ENCODE measurements at regions of chr14 and their contacts with region 1.

Region 1: GRCh38 chr14:49620182-49621113 is at the starts of genes MGAT2 and RPL36AL:
- DNase-seq: peak; percentile 91 to 97 (median 94)
- ATAC-seq: peak; percentile 90
- H3K4me3 ChIP-seq: peak within 1 kb of the TSS; percentile 89
- H3K27ac ChIP-seq: peak within 1 kb of the TSS; percentile 98
- H3K4me1 ChIP-seq: peaks cover 4 to 14% of the 10 kb centered on the region in 2 experiments; a peak in 4 of 5 replicates
- H3K27me3 ChIP-seq: no peaks in the 10 kb centered on the region
- CTCF ChIP-seq: peak; percentile 5 to 35 (median 24); a peak in 2 of 6 replicates
- EP300 ChIP-seq: peak; percentile 26
- POLR2A ChIP-seq: peak; percentile 96
- RAD21 ChIP-seq: 0 out of 4 replicates have a peak, but pooled peaks of 1 of the 2 experiments have one; percentile 5
- polyA plus RNA-seq, gene MGAT2: 0.03 TPM in 1 of 2 experiments, not detected in the other
- polyA plus RNA-seq, gene RPL36AL: 625 to 674 TPM

Region 2: GRCh38 chr14:49461529-49462401 is 158.7 kb before region 1 on chr14:
- CTCF ChIA-PET with region 1: no interaction called
- POLR2A ChIA-PET with region 1: interaction called, 3 read pairs
- in situ Hi-C with region 1: no loop called
- intact Hi-C with region 1: loop called (anchors 10 kb)
- DNase-seq: peak; percentile 17 to 73 (median 30)
- ATAC-seq: peak; percentile 89
- H3K4me3 ChIP-seq: no peak overlapping the region
- H3K27ac ChIP-seq: no peak overlapping the region
- H3K4me1 ChIP-seq: no peaks in the 10 kb centered on the region
- H3K27me3 ChIP-seq: no peaks in the 10 kb centered on the region
- CTCF ChIP-seq: peak; percentile 47 to 72 (median 52); a peak in 5 of 6 replicates
- EP300 ChIP-seq: no peak
- POLR2A ChIP-seq: no peak
- RAD21 ChIP-seq: peak; percentile 63 to 72

Region 3: GRCh38 chr14:49585803-49586672 is 34.4 kb before region 1 on chr14 and contains the start of gene RPS29:
- CTCF ChIA-PET with region 1: interaction called, 3 read pairs
- POLR2A ChIA-PET with region 1: interaction called, 10 read pairs
- in situ Hi-C with region 1: no loop called
- intact Hi-C with region 1: loop called (anchors 5 kb)
- DNase-seq: peak; percentile 80 to 97 (median 86)
- ATAC-seq: peak; percentile 83
- H3K4me3 ChIP-seq: peak within 1 kb of the TSS; percentile 82
- H3K27ac ChIP-seq: peak within 1 kb of the TSS; percentile 92
- H3K4me1 ChIP-seq: peaks cover 12% of the 10 kb centered on the region in 2 experiments; a peak in 4 of 5 replicates
- H3K27me3 ChIP-seq: no peaks in the 10 kb centered on the region
- CTCF ChIP-seq: no peak
- EP300 ChIP-seq: no peak
- POLR2A ChIP-seq: peak; percentile 99
- RAD21 ChIP-seq: no peak
- polyA plus RNA-seq, gene RPS29: 3,039 to 3,940 TPM

Region 4: GRCh38 chr14:49598485-49599300 is 21.8 kb before region 1 on chr14 and contains the start of gene LRR1:
- CTCF ChIA-PET with region 1: interaction called, 3 read pairs
- POLR2A ChIA-PET with region 1: interaction called, 16 read pairs
- in situ Hi-C with region 1: no loop called
- intact Hi-C with region 1: loop called (anchors 1 kb)
- DNase-seq: peak; percentile 59 to 81 (median 64)
- ATAC-seq: peak; percentile 74
- H3K4me3 ChIP-seq: peak within 1 kb of the TSS; percentile 53
- H3K27ac ChIP-seq: peak within 1 kb of the TSS; percentile 96
- H3K4me1 ChIP-seq: peaks cover 12 to 25% of the 10 kb centered on the region in 2 experiments
- H3K27me3 ChIP-seq: no peaks in the 10 kb centered on the region
- CTCF ChIP-seq: no peak
- EP300 ChIP-seq: peak; percentile 16; the same call in 1 of the 2 replicates
- POLR2A ChIP-seq: peak; percentile 95
- RAD21 ChIP-seq: no peak
- polyA plus RNA-seq, gene LRR1: 56.5 to 58.1 TPM

Region 5: DNA sequence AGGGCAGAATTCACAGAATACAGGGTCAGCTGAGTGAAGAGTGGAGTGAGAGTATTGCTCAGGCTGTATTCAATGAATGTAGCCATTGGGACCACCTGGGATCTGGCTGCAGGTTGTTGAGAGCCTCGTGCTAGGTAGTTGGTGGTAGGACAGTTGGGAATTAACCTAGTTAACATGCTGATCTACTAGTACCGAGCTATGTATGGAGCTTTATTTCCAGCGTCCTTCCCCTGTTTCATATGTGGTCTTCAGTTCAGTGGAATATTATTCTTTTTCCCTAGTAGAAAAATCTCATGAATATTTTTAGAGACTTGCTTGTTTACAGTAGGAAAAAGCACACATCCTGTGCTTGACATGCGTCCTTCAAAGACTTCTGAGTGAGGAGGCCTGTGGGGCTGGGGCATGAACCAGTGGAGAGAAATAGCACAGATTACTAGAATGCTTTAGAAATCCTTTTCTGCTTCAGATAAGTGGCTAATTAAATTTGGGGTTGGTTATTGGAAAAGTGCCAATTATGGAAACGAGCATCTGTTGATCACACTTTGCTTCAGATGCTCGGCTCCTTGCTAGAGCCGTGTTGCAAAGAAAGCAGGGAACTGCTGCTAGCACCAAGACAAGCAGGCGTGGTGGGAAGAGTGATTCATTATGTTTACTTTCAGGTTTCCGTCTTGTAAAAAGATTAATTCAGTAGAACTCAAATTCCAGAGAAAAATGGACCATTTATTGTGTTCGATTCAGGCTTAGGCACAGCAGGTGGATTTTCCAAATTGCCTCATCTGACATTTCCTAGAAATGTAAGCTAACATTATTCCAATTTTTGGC is 326.1 kb after region 1 on chr14:
- CTCF ChIA-PET with region 1: no interaction called
- POLR2A ChIA-PET with region 1: no interaction called
- in situ Hi-C with region 1: no loop called
- intact Hi-C with region 1: no loop called
- DNase-seq: peak in 2 of 4 experiments; percentile 17 to 20
- ATAC-seq: peak; percentile 47; the same call in 1 of the 3 replicates
- H3K4me3 ChIP-seq: no peak overlapping the region
- H3K27ac ChIP-seq: no peak overlapping the region
- H3K4me1 ChIP-seq: no peaks in the 10 kb centered on the region; a peak in 2 of 5 replicates
- H3K27me3 ChIP-seq: no peaks in the 10 kb centered on the region
- CTCF ChIP-seq: no peak
- EP300 ChIP-seq: no peak
- POLR2A ChIP-seq: no peak
- RAD21 ChIP-seq: no peak